ENCODE measurements at regions of chr5 and their contacts with region 1.

Region 1: DNA sequence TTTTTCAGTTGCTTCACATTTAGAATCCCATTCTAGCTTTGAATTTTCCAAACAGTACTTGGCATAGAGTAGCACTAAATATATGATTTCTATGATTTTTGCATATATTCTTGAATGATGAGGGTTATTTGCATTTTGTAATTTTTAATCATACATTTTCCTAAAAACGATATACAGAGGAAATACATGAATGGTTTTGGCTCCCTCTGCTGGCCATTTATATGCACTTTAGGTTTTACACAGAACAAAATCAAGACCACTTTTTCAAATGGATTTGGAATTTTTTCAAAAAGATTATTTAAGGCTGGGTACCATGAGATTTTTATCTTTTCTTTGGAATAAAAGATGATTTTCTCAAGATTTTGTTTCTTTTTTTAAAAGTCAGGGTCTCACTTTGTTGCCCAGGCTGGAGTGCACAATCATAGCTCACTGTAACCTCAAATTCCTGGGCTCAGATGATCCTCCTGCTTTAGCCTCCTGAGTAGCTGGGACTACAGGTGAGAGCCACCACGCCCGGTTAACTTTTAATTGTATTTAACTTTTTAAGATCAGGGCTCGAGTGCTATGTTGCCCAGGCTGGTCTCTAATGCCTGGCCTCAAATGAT is 16.7 kb upstream of the COMMD10 start:
- DNase-seq: peak; percentile 11 to 60
- ATAC-seq: peak in 1 of 2 experiments; percentile 77; a peak in 3 of 6 replicates
- H3K4me3 ChIP-seq: no peak overlapping the region
- H3K27ac ChIP-seq: no peak overlapping the region
- H3K4me1 ChIP-seq: no peaks in the 10 kb centered on the region
- CTCF ChIP-seq: peak; percentile 90
- EP300 ChIP-seq: no peak
- POLR2A ChIP-seq: no peak
- RAD21 ChIP-seq: peak; percentile 88

Region 2: DNA sequence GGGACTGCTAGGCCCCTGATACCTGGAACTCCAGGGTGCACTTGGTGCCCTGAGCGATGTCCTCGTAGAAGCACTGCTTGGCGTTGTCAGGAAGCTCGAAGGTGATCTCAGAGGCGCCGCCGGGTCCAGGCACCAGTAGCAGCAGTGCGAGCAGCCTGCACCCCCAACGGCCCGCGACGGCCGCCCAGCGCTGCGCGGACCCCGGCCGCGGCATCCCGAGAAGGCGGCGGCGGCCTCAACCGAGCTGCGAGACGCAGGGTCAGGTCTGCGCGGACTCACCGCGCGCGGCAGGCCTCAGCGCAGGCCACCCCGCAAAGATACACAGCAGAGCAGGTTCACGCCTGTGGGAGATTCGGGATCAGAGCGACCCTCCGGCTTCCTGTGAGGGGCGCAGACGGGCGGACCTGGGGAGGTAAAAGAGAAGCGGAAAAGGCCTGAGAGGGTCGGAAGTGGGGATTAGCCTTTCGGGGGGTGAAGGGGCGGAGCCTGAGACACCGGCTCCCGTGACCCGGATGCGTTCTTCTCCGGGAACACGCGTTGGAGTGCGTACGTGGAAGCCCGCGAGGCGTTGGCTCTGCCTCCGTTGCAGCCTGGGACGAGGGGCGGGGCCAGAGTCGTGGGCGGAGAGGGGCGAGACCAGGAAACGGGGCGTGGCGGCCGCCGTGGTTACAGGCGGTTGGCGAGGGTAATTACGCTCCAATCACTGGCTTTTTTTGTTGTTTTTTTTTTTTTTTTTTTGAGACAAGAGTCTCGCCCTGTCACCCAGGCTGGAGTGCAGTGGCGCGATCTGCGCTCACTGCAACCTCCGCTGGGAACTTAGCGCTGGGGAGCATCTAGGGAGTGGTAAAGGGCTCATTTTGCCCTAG is 442.3 kb before region 1 on chr5 and contains the start of gene TMED7:
- CTCF ChIA-PET with region 1: interaction called, 15 read pairs
- POLR2A ChIA-PET with region 1: no interaction called
- DNase-seq: peak; percentile 88 to 97
- ATAC-seq: peak; percentile 96 to 98
- H3K4me3 ChIP-seq: peak within 1 kb of the TSS; percentile 98
- H3K27ac ChIP-seq: peak within 1 kb of the TSS; percentile 97 to 98
- H3K4me1 ChIP-seq: peaks cover 25% of the 10 kb centered on the region; the same call in 2 of the 3 replicates
- CTCF ChIP-seq: no peak
- EP300 ChIP-seq: no peak
- POLR2A ChIP-seq: peak; percentile 76
- RAD21 ChIP-seq: no peak
- polyA plus RNA-seq, gene TMED7: 76.1 and 99.1 TPM in 2 replicates

Region 3: DNA sequence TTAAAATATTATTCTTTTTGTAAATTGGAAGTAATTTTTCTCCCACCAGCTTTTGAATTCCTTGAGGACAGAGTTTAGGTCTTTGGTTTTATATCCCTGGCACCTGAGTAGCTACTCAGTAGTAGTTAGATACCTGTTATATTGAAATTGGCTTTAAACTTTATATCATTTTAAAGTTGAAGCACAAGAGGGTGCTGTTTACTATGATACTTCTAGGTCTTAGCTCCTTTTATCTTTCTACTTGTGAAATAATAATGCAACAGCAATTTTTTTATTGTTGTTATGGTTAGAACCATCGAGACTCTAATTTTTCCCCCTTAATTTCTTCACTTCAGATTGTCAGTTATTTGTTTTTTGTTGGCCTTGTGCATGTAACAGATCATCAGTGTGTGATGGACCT is 180.1 kb before region 1 on chr5:
- CTCF ChIA-PET with region 1: interaction called, 12 read pairs
- POLR2A ChIA-PET with region 1: no interaction called
- DNase-seq: peak in 1 of 2 experiments; percentile 24
- ATAC-seq: peak in 1 of 2 experiments; percentile 60; a peak in 2 of 6 replicates
- H3K4me3 ChIP-seq: no peak overlapping the region
- H3K27ac ChIP-seq: no peak overlapping the region
- H3K4me1 ChIP-seq: no peaks in the 10 kb centered on the region
- CTCF ChIP-seq: peak; percentile 50
- EP300 ChIP-seq: no peak
- POLR2A ChIP-seq: no peak
- RAD21 ChIP-seq: peak; percentile 51 to 57

Region 4: GRCh38 chr5:116023619-116024018 is 44.5 kb before region 1 on chr5:
- CTCF ChIA-PET with region 1: no interaction called
- POLR2A ChIA-PET with region 1: no interaction called
- DNase-seq: no peak
- ATAC-seq: no peak
- H3K4me3 ChIP-seq: no peak overlapping the region
- H3K27ac ChIP-seq: no peak overlapping the region
- H3K4me1 ChIP-seq: no peaks in the 10 kb centered on the region
- CTCF ChIP-seq: no peak
- EP300 ChIP-seq: no peak
- POLR2A ChIP-seq: no peak
- RAD21 ChIP-seq: no peak

Region 5: GRCh38 chr5:116078199-116078598 is 10.1 kb after region 1 on chr5:
- CTCF ChIA-PET with region 1: interaction called, 30 read pairs
- POLR2A ChIA-PET with region 1: no interaction called
- DNase-seq: no peak
- ATAC-seq: no peak
- H3K4me3 ChIP-seq: no peak overlapping the region
- H3K27ac ChIP-seq: no peak overlapping the region
- H3K4me1 ChIP-seq: no peaks in the 10 kb centered on the region
- CTCF ChIP-seq: no peak
- EP300 ChIP-seq: no peak
- POLR2A ChIP-seq: no peak
- RAD21 ChIP-seq: no peak

Region 6: DNA sequence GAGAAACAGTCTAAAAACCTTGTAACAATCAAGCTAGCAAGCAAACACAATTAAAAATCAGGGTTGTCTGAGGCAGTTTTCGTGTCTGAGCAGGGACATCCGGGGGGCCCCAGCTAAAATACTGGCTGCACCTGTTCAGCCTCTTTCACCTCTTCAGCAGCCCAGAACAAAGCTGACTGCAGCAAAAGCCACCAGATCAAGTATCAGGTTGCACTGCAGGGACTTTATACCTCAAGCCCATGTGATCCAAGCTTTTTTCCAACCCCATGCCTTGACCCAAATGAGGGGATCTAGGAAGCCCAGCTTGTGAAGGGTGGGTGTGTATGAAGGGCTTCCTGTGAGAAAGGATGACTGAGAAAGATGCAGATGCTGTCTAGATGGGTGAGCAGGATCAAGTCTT is 373.1 kb after region 1 on chr5:
- CTCF ChIA-PET with region 1: no interaction called
- POLR2A ChIA-PET with region 1: no interaction called
- DNase-seq: no peak
- ATAC-seq: no peak
- H3K4me3 ChIP-seq: no peak overlapping the region
- H3K27ac ChIP-seq: no peak overlapping the region
- H3K4me1 ChIP-seq: no peaks in the 10 kb centered on the region
- CTCF ChIP-seq: no peak
- EP300 ChIP-seq: no peak
- POLR2A ChIP-seq: no peak
- RAD21 ChIP-seq: no peak

Measured in A549 (cell line).